BJ (cell line): ENCODE measurements at regions of chr13 and their contacts with region 1.

Region 1: DNA sequence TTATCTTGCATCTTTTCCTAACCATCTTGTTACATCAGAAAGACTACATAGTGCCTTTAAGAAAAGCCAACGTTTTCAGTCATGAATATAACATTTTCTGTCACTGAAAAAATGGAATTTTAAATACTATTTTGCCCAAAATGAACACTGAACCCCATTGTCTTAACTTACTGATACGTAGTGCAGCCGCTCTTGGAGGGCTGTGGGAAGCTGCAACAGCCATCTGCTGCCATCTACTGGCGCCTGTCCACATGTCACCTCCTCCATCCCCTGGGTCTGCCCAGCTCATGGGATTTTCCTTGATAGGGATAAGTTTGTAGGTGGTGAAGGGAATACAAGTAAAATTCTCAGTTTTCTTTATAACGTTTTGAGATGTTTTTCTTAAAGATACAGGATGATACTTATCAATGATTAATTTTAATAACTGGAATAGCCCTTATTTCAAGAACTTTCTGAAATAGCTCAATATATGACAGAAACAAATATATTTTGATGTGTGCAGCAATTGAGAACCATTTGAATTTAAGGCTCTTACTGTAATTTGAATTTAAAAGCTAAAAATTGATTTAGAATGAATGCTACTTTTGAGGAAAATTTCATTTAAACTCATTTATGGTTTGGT is 73.7 kb downstream of the GGACT start:
- DNase-seq: no peak
- H3K4me3 ChIP-seq: no peak overlapping the region
- H3K27me3 ChIP-seq: no peaks in the 10 kb centered on the region
- CTCF ChIP-seq: peak; percentile 96

Region 2: GRCh38 chr13:99916366-99917103 is 598.4 kb before region 1 on chr13:
- CTCF ChIA-PET with region 1: interaction called, 32 read pairs
- POLR2A ChIA-PET with region 1: no interaction called
- DNase-seq: no peak
- H3K4me3 ChIP-seq: no peak overlapping the region
- H3K27me3 ChIP-seq: peaks cover 5% of the 10 kb centered on the region; the same call in 1 of the 2 replicates
- CTCF ChIP-seq: peak; percentile 93

Region 3: GRCh38 chr13:100069278-100069677 is 445.6 kb before region 1 on chr13:
- CTCF ChIA-PET with region 1: no interaction called
- POLR2A ChIA-PET with region 1: interaction called, 22 read pairs
- DNase-seq: no peak
- H3K4me3 ChIP-seq: no peak overlapping the region
- H3K27me3 ChIP-seq: no peaks in the 10 kb centered on the region; the same call in 1 of the 2 replicates
- CTCF ChIP-seq: no peak

Region 4: DNA sequence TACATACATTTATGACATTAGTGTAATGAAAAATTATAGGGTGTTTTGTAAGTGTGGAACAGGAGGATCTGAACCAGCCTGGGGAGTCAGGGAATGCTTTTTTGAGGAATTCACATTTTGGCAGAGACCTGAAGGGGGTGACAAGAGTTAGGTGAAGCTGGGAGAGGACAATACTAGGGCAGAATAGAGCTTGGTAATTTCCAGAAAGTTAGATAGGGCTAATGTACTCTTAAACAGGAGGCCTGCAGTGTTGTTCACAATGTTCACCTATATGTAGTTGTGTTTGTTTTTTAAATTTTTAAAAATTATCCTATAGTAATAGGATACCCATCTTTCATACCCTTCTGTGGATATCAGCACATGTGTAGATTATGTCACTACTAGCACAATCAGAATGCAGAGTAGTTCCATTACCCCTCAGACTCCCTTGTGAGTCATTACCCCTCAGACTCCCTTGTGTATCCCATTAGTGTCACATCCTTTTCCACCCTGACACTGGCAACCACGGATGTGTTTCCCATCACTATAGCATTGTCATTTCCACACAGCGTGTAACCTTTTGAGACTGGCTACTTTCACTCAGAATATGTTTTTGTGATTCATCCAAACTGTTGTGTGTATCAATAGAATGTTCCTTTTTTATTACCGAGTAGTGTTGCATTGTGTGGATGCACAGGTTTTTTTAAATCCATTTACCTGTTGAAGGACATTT is 382.9 kb before region 1 on chr13:
- CTCF ChIA-PET with region 1: no interaction called
- POLR2A ChIA-PET with region 1: no interaction called
- DNase-seq: peak; percentile 31
- H3K4me3 ChIP-seq: no peak overlapping the region
- H3K27me3 ChIP-seq: no peaks in the 10 kb centered on the region
- CTCF ChIP-seq: no peak

Region 5: GRCh38 chr13:100230769-100231149 is 284.1 kb before region 1 on chr13:
- CTCF ChIA-PET with region 1: interaction called, 11 read pairs
- POLR2A ChIA-PET with region 1: no interaction called
- DNase-seq: no peak
- H3K4me3 ChIP-seq: no peak overlapping the region
- H3K27me3 ChIP-seq: no peaks in the 10 kb centered on the region
- CTCF ChIP-seq: no peak

Region 6: DNA sequence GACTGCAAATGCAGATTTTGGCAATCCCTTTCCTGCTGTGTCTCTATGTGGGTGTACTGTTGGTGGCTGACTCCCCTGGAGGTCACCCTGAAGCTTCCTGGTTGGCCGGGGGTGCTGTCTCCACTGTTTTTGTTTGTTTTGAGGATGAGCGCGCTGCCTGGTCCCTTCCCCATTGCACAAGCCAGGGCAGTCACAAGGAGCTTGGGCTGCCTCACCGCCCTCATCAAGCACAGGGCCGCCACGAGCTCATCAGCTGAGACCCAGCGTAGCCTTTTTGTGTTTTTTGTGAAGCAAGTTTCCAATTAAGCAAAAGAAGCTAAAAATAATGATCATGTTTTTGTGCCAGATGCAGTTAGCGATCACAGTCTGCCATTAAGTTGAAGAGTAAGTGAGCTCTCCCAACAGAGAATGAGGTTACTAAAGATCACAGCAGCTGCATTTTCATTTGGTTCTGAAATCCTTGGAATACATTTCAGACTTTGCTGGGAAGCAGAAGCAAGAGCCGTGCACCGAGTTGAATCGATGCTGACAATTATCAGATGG is 15.8 kb after region 1 on chr13:
- CTCF ChIA-PET with region 1: interaction called, 42 read pairs
- POLR2A ChIA-PET with region 1: no interaction called
- DNase-seq: no peak
- H3K4me3 ChIP-seq: no peak overlapping the region
- H3K27me3 ChIP-seq: no peaks in the 10 kb centered on the region
- CTCF ChIP-seq: no peak